ENCODE measurements at regions of chr9 and their contacts with region 1.

Region 1: DNA sequence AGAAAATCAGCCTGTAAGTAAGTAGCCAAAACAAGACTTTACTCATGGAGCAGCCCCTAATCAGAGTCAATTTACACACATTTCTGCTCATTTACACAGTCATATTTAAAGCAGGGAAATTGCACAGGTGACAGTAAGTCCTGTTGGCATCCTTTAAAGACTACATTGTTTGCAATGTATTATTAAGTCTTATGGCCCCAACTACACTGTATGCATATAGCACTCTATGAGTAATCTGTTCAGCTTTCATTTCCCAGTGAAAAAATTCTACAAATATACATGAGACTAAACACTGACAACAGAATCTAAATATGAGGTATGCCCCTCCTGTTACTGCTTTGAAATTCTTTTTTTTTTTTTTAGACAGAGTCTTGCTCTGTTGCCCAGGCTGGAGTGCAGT is 19.7 kb downstream of the PPP6C start:
- DNase-seq: no peak
- H3K4me3 ChIP-seq: no peak overlapping the region
- H3K27ac ChIP-seq: peak overlapping the region in 1 of 2 donors; percentile 29
- H3K4me1 ChIP-seq: peaks cover 0 to 42% of the 10 kb centered on the region in 2 donors
- H3K27me3 ChIP-seq: no peaks in the 10 kb centered on the region
- CTCF ChIP-seq: no peak

Region 2: GRCh38 chr9:125143375-125144090 is 26.4 kb before region 1 on chr9 and contains the start of gene SCAI:
- intact Hi-C with region 1: loop called (anchors 1 kb)
- DNase-seq: peak; percentile 97 to 100
- H3K4me3 ChIP-seq: peak within 1 kb of the TSS; percentile 76 to 95
- H3K27ac ChIP-seq: peak within 1 kb of the TSS; percentile 56 to 63
- H3K4me1 ChIP-seq: peaks cover 0 to 8% of the 10 kb centered on the region in 2 donors
- H3K27me3 ChIP-seq: no peaks in the 10 kb centered on the region
- CTCF ChIP-seq: peak; percentile 98 to 99 (median 99)
- total RNA-seq, gene SCAI: 2.4 TPM

Region 3: DNA sequence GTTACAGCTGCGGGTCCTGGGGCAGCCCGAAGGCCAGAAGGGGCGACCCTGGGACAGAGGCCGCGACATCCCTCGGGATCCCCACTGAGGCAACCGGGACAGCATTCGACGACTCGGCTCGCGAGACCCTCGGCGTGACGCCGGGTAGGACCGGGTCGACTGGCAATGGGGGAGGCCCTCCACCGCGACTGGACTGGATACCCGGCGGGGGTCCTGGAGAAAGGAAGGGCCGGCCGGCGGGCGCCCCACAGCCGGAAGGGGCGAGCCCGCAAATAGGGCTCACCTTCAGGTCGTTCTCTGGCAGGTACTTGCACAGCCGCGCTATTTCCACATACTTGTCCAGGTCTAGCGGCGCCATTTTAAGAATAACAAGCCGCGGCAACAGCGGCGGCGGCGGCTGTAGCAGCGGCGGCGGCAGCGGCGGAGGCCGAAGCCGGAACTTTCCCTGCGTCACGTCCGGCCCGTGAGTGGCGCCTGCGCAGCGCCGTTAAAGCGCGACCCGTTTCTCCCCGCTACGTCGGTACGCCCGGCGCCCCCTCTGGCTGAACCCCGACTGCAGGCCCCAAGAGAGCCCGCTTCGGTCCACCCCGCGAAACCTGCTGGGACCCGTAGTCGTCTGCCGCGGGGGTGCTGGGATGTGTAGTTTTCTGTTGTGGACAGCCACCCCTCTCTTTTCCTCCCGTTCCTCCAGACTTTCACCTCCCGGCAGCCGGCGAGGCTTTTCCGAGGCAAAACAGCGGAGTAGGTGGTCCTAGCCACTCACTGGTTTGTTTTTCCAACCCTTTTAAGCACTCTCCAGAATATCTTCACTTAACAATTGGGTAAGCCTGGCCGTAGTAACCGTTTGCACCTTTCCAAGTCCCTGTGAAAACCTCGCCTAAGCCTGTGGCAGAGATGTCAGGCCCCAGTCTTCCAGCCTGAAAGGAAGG is 19.7 kb after region 1 on chr9 and contains the start of gene PPP6C:
- intact Hi-C with region 1: loop called (anchors 1 kb)
- DNase-seq: peak; percentile 80 to 98
- H3K4me3 ChIP-seq: peak within 1 kb of the TSS; percentile 84 to 99
- H3K27ac ChIP-seq: peak within 1 kb of the TSS; percentile 98 to 99
- H3K4me1 ChIP-seq: peaks cover 9 to 44% of the 10 kb centered on the region in 2 donors
- H3K27me3 ChIP-seq: no peaks in the 10 kb centered on the region
- CTCF ChIP-seq: peak; percentile 53 to 68 (median 60)
- total RNA-seq, gene PPP6C: 33.8 TPM

Region 4: GRCh38 chr9:125200210-125201047 is 30.5 kb after region 1 on chr9 and contains the start of gene RABEPK:
- intact Hi-C with region 1: loop called (anchors 5 kb)
- DNase-seq: peak; percentile 64 to 94
- H3K4me3 ChIP-seq: peak within 1 kb of the TSS; percentile 77 to 78
- H3K27ac ChIP-seq: peak within 1 kb of the TSS; percentile 89 to 95
- H3K4me1 ChIP-seq: peaks cover 0 to 2% of the 10 kb centered on the region in 2 donors
- H3K27me3 ChIP-seq: no peaks in the 10 kb centered on the region
- CTCF ChIP-seq: no peak
- total RNA-seq, gene RABEPK: 20.4 TPM

Region 5: DNA sequence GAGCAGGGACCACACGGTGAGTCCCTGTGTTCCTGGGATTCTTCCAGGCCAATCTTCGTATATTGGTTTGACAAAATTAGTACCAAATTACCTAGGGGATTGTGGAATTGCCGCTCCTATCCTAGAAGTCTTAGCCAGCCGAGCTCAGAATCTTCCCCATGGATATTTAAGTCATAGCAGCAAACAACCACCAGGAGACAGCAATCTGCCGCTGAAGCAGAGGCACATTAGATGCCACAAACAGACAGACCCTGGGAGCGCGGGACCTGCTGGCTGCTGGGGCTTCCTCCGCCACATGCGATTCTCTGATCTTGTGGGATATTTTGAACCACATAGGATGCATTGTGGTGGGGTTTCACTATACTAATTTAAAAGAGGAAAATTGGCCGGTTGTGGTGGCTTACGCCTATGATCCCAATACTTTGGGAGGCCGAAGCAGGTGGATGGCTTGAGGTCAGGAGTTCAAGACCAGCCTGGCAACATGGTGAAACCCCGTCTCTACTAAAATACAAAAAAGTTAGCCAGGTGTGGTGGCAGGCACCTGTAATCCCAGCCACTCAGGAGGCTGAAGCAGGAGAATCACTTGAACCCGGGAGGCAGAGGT is 1603.2 kb after region 1 on chr9:
- intact Hi-C with region 1: no loop called
- DNase-seq: no peak
- H3K4me3 ChIP-seq: no peak overlapping the region
- H3K27ac ChIP-seq: no peak overlapping the region
- H3K4me1 ChIP-seq: no peaks in the 10 kb centered on the region
- H3K27me3 ChIP-seq: no peaks in the 10 kb centered on the region
- CTCF ChIP-seq: peak in 1 of 3 experiments; percentile 23

Measured in ascending aorta (tissue), 2 donors.